ENCODE measurements at regions of chr7 and their contacts with region 1.

Region 1: DNA sequence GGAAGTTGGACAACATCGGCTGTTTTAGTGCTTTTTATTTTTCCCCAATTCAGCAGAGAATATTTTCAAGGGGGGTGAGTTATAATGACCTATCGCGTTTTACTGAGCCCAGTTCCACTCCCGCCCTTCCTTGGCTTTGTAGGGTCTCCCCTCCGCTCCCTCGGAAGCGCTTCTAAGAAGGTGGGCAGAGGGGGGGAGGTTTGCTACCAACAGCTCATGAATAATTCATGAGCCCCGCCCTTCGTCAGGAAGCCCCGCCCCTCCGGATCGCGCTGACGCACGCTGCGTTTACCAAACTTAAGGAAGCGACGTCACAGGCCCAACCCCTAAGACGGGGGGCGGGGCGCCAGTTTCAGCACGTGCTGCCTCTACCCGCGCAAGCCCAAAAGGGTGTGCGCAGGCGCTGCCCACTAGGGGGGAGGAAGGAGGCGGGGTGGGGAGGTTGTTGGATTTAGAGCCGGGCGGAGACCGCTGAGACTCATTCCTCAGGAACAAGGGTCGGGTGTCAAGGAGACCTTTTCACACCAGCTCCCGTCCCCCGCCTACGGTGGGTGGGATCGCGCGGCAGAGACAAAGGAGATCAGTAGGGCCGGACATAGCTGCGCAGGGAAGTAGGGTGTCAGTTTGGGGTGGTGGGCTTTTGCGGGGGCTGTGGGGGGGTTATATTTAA is 529 bp upstream of the MEPCE start:
- DNase-seq: peak; percentile 100
- H3K4me3 Mint-ChIP-seq: peak overlapping the region; percentile 95
- H3K27ac Mint-ChIP-seq: peak overlapping the region; percentile 97
- H3K4me1 Mint-ChIP-seq: peaks cover 43% of the 10 kb centered on the region
- H3K27me3 Mint-ChIP-seq: peaks cover 11% of the 10 kb centered on the region

Region 2: GRCh38 chr7:100119062-100119700 is 309.9 kb before region 1 on chr7 and contains the starts of genes CNPY4 and TAF6:
- intact Hi-C with region 1: loop called (anchors 2 kb)
- DNase-seq: peak; percentile 98
- H3K4me3 Mint-ChIP-seq: peak within 1 kb of the TSS; percentile 84
- H3K27ac Mint-ChIP-seq: peak within 1 kb of the TSS; percentile 96
- H3K4me1 Mint-ChIP-seq: peaks cover 16% of the 10 kb centered on the region
- H3K27me3 Mint-ChIP-seq: no peaks in the 10 kb centered on the region
- total RNA-seq, gene CNPY4: 16.2 and 17.0 TPM in 2 replicates
- total RNA-seq, gene TAF6: 68.4 and 71.5 TPM in 2 replicates

Region 3: DNA sequence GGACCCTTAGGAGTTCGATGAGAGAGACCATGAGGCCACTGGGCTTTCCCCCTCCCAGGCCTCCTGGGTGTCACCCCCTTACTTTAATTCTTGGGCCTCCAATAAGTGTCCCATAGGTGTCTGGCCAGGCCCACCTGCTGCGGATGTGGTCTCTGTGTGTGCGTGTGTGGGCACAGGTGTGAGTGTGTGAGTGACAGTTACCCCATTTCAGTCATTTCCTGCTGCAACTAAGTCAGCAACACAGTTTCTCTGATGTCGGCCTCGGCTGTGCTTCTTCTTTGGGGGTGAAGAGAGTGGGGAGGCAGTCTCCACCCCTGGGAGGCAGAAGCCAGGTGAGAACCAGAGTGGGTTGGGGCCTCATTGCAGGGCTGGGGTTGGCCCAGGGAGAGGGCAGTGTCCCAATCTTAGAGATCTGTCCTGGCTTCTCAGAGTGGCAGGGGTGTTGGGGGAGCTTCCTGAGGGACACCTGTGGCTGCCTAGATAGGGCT is 207.8 kb before region 1 on chr7:
- intact Hi-C with region 1: loop called (anchors 2 kb)
- DNase-seq: peak; percentile 92
- H3K4me3 Mint-ChIP-seq: peak overlapping the region; percentile 96
- H3K27ac Mint-ChIP-seq: peak overlapping the region; percentile 99
- H3K4me1 Mint-ChIP-seq: peaks cover 54% of the 10 kb centered on the region
- H3K27me3 Mint-ChIP-seq: no peaks in the 10 kb centered on the region

Region 4: DNA sequence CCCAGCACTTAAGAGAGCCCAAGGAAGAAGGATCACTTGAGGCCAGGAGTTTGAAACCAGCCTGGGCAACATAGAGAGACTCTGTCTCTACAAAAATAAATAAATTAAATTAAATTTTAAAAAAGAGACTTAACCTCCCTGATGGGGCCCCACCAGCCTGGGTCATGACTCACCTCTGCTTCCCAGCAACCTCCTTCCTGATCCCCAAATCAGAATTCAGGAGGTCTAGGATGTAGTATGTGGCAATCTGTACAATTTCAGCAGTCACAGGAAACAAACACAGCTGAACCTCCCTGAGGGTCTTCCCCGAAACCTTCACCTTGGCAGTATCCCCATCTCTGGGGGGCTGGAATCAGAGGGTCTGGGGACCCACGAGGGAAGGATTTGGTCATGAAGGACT is 16.9 kb after region 1 on chr7:
- intact Hi-C with region 1: loop called (anchors 1 kb)
- DNase-seq: no peak
- H3K4me3 Mint-ChIP-seq: no peak overlapping the region
- H3K27ac Mint-ChIP-seq: peak overlapping the region; percentile 25
- H3K4me1 Mint-ChIP-seq: peaks cover 28% of the 10 kb centered on the region
- H3K27me3 Mint-ChIP-seq: no peaks in the 10 kb centered on the region

Region 5: GRCh38 chr7:100568896-100569844 is 140.1 kb after region 1 on chr7:
- intact Hi-C with region 1: no loop called
- DNase-seq: peak; percentile 81
- H3K4me3 Mint-ChIP-seq: peak overlapping the region; percentile 24
- H3K27ac Mint-ChIP-seq: no peak overlapping the region
- H3K4me1 Mint-ChIP-seq: peaks cover 19% of the 10 kb centered on the region
- H3K27me3 Mint-ChIP-seq: peaks cover 3% of the 10 kb centered on the region

Region 6: GRCh38 chr7:100586266-100587025 is 157.3 kb after region 1 on chr7 and contains the start of gene FBXO24:
- intact Hi-C with region 1: loop called (anchors 1 kb)
- DNase-seq: peak; percentile 100
- H3K4me3 Mint-ChIP-seq: peak within 1 kb of the TSS; percentile 91
- H3K27ac Mint-ChIP-seq: peak within 1 kb of the TSS; percentile 96
- H3K4me1 Mint-ChIP-seq: peaks cover 30% of the 10 kb centered on the region
- H3K27me3 Mint-ChIP-seq: peaks cover 6% of the 10 kb centered on the region
- total RNA-seq, gene FBXO24: 0.38 and 0.42 TPM in 2 replicates

Measured in activated CD4-positive, alpha-beta T cell treated with anti-CD3 and anti-CD28 coated beads, Interleukin-2, amount 10 ng/mL, durations not matched to agents 24 days and 14 days (primary cell).